Cardiac septum (tissue), 1 donor: ENCODE measurements at regions of chr5 and their contacts with region 1.

Region 1: GRCh38 chr5:75511435-75512384 is at the starts of genes CERT1 and POLK:
- DNase-seq: peak; percentile 100
- total RNA-seq, gene CERT1: 39.5 TPM
- total RNA-seq, gene POLK: 26.6 TPM

Region 2: GRCh38 chr5:75236322-75237316 is 275.1 kb before region 1 on chr5 and contains the start of gene ANKRD31:
- intact Hi-C with region 1: loop called (anchors 10 kb)
- DNase-seq: peak; percentile 94
- total RNA-seq, gene ANKRD31: 0.13 TPM

Region 3: GRCh38 chr5:75336625-75337339 is 174.9 kb before region 1 on chr5 and contains the start of gene HMGCR:
- intact Hi-C with region 1: loop called (anchors 5 kb)
- DNase-seq: peak; percentile 100
- total RNA-seq, gene HMGCR: 12.6 TPM

Region 4: DNA sequence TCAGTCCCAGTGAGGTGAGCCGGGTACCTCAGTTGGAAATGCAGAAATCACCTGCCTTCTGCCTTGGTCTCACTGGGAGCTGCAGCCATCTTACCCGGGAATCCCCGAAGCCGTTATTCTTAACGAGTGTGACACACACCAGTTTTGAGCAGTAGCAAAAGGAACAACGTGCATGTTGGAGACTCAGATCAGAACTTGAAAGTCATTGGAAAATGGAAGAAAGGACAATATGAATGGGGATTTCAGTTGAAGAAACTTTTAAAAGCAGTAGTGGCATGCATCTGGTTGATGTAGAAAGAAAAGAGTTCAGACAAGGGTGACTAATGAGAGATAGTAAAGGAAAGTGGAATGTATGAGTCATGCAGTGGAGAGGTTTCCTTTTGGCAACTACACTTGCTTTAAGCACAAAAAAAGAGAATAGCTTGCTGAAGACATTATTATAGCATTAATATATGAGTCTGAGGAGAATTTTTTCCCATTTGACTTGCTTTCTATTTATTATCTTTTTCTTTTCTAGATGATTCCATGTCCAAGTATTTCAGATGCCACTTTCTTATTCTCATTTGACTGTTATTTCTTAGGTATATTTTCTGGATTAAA is 55.1 kb after region 1 on chr5:
- intact Hi-C with region 1: loop called (anchors 2 kb)
- DNase-seq: no peak

Region 5: GRCh38 chr5:75668977-75669689 is 157.4 kb after region 1 on chr5:
- intact Hi-C with region 1: loop called (anchors 10 kb)
- DNase-seq: no peak

Region 6: GRCh38 chr5:75717082-75717922 is 205.6 kb after region 1 on chr5 and contains the start of gene POC5:
- intact Hi-C with region 1: loop called (anchors 5 kb)
- DNase-seq: peak; percentile 96
- total RNA-seq, gene POC5: 3.8 TPM